Left ventricle myocardium superior (tissue), 1 donor: ENCODE measurements at regions of chr3 and their contacts with region 1.

Region 1: GRCh38 chr3:40971191-40972168 is 227.8 kb upstream of the CTNNB1 start:
- DNase-seq: peak; percentile 60
- ATAC-seq: peak; percentile 92

Region 2: GRCh38 chr3:40445062-40445461 is 526.4 kb before region 1 on chr3:
- intact Hi-C with region 1: no loop called
- DNase-seq: no peak
- ATAC-seq: no peak

Region 3: DNA sequence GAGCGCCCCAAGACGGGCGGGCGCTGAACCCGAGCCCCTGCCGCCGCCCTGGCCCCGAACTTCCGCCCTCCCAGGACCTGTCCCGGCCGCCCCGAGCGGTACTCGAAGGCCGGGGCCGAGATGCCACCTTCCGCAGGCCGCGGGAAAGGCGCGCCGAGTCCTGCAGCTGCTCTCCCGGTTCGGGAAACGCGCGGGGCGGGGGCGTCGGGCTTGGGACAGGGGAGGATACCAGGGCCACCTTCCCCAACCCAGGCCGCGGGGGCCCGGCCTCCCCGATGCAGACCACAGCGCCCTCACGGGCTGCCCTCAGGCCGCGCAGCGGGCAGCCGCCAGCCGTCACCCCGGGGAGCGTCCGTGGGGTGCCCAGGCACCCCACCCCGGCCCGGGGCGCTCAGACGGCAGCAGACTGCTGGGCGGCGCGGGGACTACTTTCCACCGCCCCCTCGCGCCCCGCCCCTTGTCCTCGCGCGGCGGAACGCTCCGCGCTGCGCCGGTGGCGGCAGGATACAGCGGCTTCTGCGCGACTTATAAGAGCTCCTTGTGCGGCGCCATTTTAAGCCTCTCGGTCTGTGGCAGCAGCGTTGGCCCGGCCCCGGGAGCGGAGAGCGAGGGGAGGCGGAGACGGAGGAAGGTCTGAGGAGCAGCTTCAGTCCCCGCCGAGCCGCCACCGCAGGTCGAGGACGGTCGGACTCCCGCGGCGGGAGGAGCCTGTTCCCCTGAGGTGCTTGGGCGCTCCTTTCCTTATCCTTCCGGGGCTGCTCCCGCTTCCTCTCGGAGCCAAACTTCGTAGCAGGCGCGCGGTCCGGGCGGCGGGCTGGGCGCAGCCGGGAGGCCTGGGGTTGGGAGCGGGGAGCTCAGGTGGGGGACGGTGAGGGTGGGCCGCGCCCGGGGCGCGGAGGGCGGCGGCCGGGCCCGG is 227.7 kb after region 1 on chr3 and contains the start of gene CTNNB1:
- intact Hi-C with region 1: loop called (anchors 10 kb)
- DNase-seq: peak; percentile 96
- ATAC-seq: peak; percentile 91
- total RNA-seq, gene CTNNB1: 145 TPM